Caco-2 (cell line): ENCODE measurements at regions of chr13 and their contacts with region 1.

Region 1: GRCh38 chr13:113001241-113002140 is 32.5 kb downstream of the MCF2L start:
- DNase-seq: peak; percentile 79 to 86
- H3K4me3 ChIP-seq: peak overlapping the region; percentile 36
- H3K4me3 Mint-ChIP-seq: peak overlapping the region; percentile 78
- H3K27ac Mint-ChIP-seq: no peak overlapping the region
- H3K4me1 ChIP-seq: peaks cover 21% of the 10 kb centered on the region
- H3K4me1 Mint-ChIP-seq: no peaks in the 10 kb centered on the region
- H3K27me3 ChIP-seq: no peaks in the 10 kb centered on the region
- H3K27me3 Mint-ChIP-seq: no peaks in the 10 kb centered on the region
- CTCF ChIP-seq: no peak

Region 2: GRCh38 chr13:112984954-112985802 is 16.3 kb before region 1 on chr13:
- CTCF ChIA-PET with region 1: interaction called, 3 read pairs
- POLR2A ChIA-PET with region 1: no interaction called
- intact Hi-C with region 1: loop called (anchors 2 kb)
- DNase-seq: peak in 1 of 2 experiments; percentile 60
- H3K4me3 ChIP-seq: peak overlapping the region; percentile 33
- H3K4me3 Mint-ChIP-seq: peak overlapping the region; percentile 66
- H3K27ac Mint-ChIP-seq: peak overlapping the region; percentile 53
- H3K4me1 ChIP-seq: peaks cover 27% of the 10 kb centered on the region
- H3K4me1 Mint-ChIP-seq: peaks cover 20% of the 10 kb centered on the region
- H3K27me3 ChIP-seq: no peaks in the 10 kb centered on the region
- H3K27me3 Mint-ChIP-seq: no peaks in the 10 kb centered on the region
- CTCF ChIP-seq: no peak

Region 3: DNA sequence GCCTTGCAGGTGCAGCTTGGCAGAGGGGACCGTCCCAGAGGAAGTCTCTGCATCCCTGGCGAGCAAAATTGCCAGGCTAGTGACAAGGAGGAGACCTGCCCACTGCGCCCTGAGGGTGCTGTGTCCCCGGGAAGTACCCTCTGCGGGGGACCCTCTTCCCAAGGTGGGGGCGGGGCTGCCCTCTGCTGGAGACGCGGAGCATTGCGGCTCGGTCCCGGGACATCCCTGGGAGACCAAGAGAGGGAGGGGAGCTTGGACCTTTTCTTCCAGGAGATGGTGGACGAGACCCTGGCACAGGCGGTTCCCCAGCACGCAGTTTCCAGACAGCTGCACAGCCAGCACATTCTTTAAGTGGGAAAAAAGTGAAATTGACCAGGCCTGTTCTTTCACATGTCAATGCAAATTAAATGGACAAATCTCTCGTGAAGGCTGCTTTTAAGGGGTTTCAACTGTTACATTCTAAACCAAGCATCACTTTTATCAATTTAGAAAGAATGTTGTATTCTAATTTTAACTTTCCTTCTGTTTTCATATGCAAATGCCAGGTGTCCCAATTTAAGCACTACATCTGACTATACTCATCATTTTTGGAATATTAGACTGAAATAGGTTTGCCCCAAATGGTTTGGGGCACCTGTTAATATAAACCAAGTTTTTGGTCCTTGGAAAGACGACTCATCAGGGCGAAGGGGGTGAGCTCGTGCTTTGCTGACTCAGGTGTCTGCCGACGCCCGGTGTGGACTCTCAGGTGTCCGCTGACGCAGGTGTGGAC is 28.2 kb after region 1 on chr13:
- CTCF ChIA-PET with region 1: interaction called, 9 read pairs
- POLR2A ChIA-PET with region 1: no interaction called
- intact Hi-C with region 1: loop called (anchors 1 kb)
- DNase-seq: peak; percentile 74 to 87
- H3K4me3 ChIP-seq: no peak overlapping the region
- H3K4me3 Mint-ChIP-seq: no peak overlapping the region
- H3K27ac Mint-ChIP-seq: no peak overlapping the region
- H3K4me1 ChIP-seq: no peaks in the 10 kb centered on the region
- H3K4me1 Mint-ChIP-seq: peaks cover 11% of the 10 kb centered on the region
- H3K27me3 ChIP-seq: no peaks in the 10 kb centered on the region
- H3K27me3 Mint-ChIP-seq: no peaks in the 10 kb centered on the region
- CTCF ChIP-seq: peak; percentile 95 to 97